CD8-positive, alpha-beta T cell (primary cell): ENCODE measurements at regions of chr15 and their contacts with region 1.

Region 1: DNA sequence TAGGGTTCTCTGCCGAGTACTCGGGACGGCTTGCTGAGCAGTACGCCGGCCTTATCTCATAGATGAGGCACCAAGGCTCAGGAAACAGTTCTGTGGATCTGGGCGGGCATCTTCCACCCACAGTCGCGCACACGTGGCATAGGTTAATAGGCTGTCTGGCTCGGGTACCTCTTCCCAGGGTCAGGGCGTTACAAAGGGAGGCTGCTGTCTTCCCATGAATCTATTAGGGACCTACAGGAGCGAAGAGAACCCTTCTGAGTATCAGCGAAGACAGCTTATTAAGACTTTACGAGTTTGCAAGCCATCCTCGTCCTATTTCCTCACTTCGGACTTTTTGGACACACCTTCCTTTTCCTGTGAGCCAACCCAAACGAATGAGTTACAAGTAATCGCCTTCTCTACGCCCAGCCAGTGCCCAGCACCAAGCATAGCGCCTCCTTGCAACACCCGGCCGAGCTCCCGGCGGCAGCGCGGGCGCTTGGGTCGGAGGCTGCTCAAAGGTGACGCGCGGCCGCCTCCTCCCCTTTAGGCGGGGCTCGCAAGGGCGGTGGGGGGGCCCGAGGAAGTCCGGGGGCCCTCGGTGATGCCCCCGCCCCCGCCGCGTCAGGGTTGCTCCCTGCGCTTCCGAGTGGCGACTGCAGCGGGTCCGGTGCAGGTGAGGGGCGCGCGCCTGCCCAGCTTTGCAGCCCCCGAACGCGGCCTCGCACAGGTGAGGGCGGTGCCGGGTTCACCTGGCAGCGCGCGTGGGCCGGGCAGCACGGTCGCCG is at the start of gene MCTP2:
- DNase-seq: peak; percentile 66 to 94 (median 82)
- ATAC-seq: peak; percentile 85
- H3K4me3 ChIP-seq: peak within 1 kb of the TSS; percentile 67 to 69
- H3K4me3 Mint-ChIP-seq: peak within 1 kb of the TSS; percentile 95
- H3K27ac ChIP-seq: peak within 1 kb of the TSS; percentile 80 to 85
- H3K27ac Mint-ChIP-seq: peak within 1 kb of the TSS; percentile 95
- H3K4me1 ChIP-seq: peaks cover 32% of the 10 kb centered on the region
- H3K4me1 Mint-ChIP-seq: peaks cover 53% of the 10 kb centered on the region
- H3K27me3 ChIP-seq: no peaks in the 10 kb centered on the region
- H3K27me3 Mint-ChIP-seq: no peaks in the 10 kb centered on the region
- CTCF ChIP-seq: no peak
- total RNA-seq, gene MCTP2: 11.2 to 16.5 TPM

Region 2: DNA sequence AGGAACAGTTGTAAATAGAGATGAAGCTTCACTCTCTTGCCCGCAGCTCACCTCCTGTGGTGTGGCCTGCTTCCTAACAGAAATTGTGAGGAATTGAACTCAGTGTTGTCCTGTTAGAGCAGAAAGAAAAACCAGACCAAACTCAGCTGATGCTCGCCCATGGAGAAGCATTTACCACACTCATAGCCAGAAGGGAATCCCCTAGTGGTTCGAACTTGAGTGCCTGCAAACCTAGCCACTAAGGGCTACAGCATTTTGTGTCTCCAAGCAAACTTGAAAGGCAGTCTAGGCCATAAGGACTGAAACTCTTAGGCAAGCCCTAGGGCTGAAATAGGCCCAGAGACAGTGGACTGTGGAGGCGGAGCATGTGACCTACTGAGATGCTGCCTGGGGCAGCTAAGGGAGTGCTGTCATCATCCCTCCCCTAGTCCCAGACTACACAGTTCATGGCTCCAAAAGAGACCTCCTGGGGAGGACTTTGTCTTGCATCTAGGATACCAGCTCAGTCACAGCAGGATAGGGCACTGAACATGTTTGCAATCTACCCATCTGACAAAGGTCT is 44.3 kb before region 1 on chr15:
- CTCF ChIA-PET with region 1: no interaction called
- POLR2A ChIA-PET with region 1: no interaction called
- intact Hi-C with region 1: no loop called
- DNase-seq: no peak
- ATAC-seq: no peak
- H3K4me3 ChIP-seq: no peak overlapping the region
- H3K4me3 Mint-ChIP-seq: no peak overlapping the region
- H3K27ac ChIP-seq: no peak overlapping the region
- H3K27ac Mint-ChIP-seq: no peak overlapping the region
- H3K4me1 ChIP-seq: no peaks in the 10 kb centered on the region
- H3K4me1 Mint-ChIP-seq: no peaks in the 10 kb centered on the region
- H3K27me3 ChIP-seq: no peaks in the 10 kb centered on the region
- H3K27me3 Mint-ChIP-seq: peaks cover 2% of the 10 kb centered on the region
- CTCF ChIP-seq: no peak

Region 3: GRCh38 chr15:94272251-94272898 is 41.2 kb after region 1 on chr15:
- CTCF ChIA-PET with region 1: interaction called, 3 read pairs
- POLR2A ChIA-PET with region 1: no interaction called
- intact Hi-C with region 1: loop called (anchors 5 kb)
- DNase-seq: peak in 3 of 9 experiments; percentile 27 to 78 (median 66)
- ATAC-seq: peak; percentile 84
- H3K4me3 ChIP-seq: no peak overlapping the region
- H3K4me3 Mint-ChIP-seq: no peak overlapping the region
- H3K27ac ChIP-seq: peak overlapping the region; percentile 21 to 81
- H3K27ac Mint-ChIP-seq: no peak overlapping the region
- H3K4me1 ChIP-seq: peaks cover 21% of the 10 kb centered on the region
- H3K4me1 Mint-ChIP-seq: peaks cover 9% of the 10 kb centered on the region
- H3K27me3 ChIP-seq: no peaks in the 10 kb centered on the region
- H3K27me3 Mint-ChIP-seq: no peaks in the 10 kb centered on the region
- CTCF ChIP-seq: no peak

Region 4: DNA sequence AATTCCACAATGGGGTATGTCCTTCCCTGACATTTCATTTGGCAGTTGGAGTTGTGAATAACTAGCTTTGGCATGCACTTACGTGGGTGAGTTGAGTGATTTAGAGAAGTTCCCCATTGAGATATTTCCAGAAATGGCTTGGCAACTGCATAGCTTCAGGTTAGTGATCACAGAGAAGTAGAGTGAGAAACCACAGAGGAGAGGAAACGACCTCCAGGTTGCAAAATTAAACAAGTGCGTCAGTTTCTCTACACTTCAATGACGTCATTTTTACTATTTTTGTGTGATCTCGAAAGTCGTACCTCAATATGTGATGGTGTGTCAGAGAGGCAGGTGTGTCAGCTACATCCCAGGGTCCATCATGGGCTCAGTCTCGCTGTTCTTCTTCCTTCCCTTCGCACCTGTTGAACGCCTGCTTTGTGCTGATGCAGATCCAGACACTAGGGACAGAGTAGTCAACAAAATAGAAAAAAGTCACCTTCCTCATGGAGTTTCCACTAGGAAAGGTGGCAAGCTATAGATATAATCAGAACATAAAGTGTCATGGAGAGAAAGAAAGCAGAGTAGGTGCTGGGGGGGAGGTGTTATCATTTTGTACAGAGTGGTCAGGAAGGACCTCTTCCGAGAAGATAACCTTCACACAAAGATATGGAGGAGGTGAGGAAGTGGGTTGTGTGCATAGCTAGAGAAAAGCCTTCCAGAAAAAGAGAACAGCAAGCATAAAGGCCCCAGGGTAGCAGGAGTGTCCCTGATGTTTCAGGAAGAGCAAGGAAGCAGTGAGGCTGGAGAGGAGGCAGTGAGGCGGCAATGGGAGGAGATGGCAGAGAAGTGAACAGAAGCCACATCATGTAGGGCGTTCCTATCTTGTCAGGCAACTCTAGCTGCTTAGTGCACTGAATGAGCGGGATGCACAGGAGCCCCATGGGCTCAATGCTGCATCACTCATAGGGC is 75.8 kb after region 1 on chr15:
- CTCF ChIA-PET with region 1: no interaction called
- POLR2A ChIA-PET with region 1: interaction called, 4 read pairs
- intact Hi-C with region 1: loop called (anchors 5 kb)
- DNase-seq: peak in 4 of 9 experiments; percentile 11 to 85 (median 60)
- ATAC-seq: peak; percentile 74
- H3K4me3 ChIP-seq: no peak overlapping the region
- H3K4me3 Mint-ChIP-seq: peak overlapping the region; percentile 36
- H3K27ac ChIP-seq: peak overlapping the region in 1 of 2 experiments; percentile 69
- H3K27ac Mint-ChIP-seq: peak overlapping the region; percentile 82
- H3K4me1 ChIP-seq: peaks cover 24% of the 10 kb centered on the region
- H3K4me1 Mint-ChIP-seq: peaks cover 39% of the 10 kb centered on the region
- H3K27me3 ChIP-seq: no peaks in the 10 kb centered on the region
- H3K27me3 Mint-ChIP-seq: no peaks in the 10 kb centered on the region
- CTCF ChIP-seq: no peak